A673 (cell line): ENCODE measurements at regions of chr12 and their contacts with region 1.

Region 1: DNA sequence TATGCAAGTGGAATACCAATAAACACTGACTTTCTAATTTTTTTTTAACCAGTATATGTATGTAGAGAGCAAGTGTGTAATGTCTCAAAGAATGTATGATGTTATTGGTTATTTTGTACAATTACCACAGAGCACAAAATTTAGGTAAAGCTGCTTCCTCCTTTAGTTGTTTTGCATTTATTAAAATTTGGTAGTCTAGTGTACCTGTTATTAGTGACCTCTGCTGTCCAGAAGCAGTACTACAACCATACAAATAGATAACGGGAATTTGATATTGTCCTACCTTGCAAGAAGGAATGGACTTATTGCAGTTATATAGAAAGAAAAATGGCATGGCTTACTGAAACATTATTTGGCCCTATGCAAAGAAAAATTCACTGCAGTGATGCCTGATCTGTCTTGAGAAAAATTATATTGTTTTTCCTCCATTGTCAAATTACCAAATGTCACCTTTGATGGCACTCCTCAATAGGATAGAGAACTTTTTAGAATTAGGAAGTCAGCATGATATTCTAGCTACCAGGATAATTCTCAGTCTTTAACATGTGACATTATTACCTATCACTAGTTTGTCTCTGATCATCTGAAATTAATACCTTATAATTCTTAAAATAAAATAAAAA is 153.9 kb upstream of the RMST start:
- DNase-seq: peak; percentile 52
- H3K4me3 ChIP-seq: no peak overlapping the region
- H3K27ac ChIP-seq: no peak overlapping the region
- H3K4me1 ChIP-seq: no peaks in the 10 kb centered on the region
- H3K27me3 ChIP-seq: peaks cover 52% of the 10 kb centered on the region
- CTCF ChIP-seq: peak; percentile 76

Region 2: DNA sequence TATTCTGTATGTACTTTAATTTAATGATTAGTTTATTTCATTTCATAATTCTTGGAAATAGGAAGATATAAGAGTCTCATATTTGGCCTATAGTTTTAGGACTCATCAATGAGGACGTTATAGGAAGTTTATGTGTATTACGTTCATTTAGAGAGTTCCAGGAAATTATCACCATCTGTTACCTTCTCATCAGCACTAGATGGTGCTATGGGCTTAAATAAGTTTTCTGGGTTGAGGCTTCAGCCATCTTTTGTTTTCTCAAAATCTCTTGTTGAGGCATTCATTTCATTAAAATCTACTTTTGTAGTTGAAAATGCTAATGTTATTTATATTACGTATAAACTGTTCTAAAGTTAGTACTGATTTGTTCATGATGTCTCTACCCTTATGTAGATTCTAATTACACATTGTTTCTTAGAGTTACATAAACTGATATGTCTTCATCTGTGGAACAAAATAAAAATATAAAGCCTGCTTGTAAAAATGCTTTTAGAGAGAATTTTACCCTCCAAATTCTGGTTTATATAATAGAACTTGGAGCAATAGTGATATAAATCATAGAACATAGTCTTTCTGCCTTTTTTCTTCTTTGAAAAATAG is 730.1 kb before region 1 on chr12:
- CTCF ChIA-PET with region 1: interaction called, 3 read pairs
- POLR2A ChIA-PET with region 1: no interaction called
- intact Hi-C with region 1: loop called (anchors 2 kb)
- DNase-seq: peak; percentile 75
- H3K4me3 ChIP-seq: no peak overlapping the region
- H3K27ac ChIP-seq: no peak overlapping the region
- H3K4me1 ChIP-seq: no peaks in the 10 kb centered on the region
- H3K27me3 ChIP-seq: peaks cover 4% of the 10 kb centered on the region
- CTCF ChIP-seq: peak; percentile 72

Region 3: DNA sequence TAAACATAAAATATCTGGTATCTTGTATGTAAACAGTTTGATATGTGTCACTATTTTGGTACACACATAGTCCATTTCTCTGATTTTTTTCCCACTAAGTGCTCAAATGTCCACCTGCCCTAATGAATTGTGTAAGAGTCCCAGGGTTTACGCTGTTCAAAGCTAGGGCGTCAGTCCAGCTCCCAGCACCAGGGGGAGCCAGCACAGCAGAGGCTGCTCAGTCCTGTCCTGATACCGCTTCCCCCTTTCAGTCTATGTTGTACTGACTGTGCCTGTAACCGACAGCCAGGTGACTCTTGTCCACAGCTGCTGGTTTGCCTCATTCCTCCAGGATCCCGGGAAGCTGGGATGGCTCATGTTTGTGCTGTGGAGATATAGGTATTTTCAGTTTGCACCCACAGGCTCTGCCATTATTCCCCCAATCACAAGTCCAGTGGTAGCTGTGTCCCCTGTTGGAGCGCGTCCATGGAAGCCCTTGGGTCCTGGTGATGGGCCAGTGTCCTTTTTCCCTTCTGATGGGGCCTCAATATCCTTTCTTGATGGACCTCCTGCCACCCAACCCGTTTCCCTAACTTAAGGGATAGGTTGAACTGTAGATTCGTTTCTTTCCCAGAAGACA is 159.6 kb before region 1 on chr12:
- CTCF ChIA-PET with region 1: no interaction called
- POLR2A ChIA-PET with region 1: no interaction called
- intact Hi-C with region 1: loop called (anchors 5 kb)
- DNase-seq: peak; percentile 64
- H3K4me3 ChIP-seq: no peak overlapping the region
- H3K27ac ChIP-seq: no peak overlapping the region
- H3K4me1 ChIP-seq: no peaks in the 10 kb centered on the region
- H3K27me3 ChIP-seq: peaks cover 75% of the 10 kb centered on the region
- CTCF ChIP-seq: peak; percentile 83